HepG2 (cell line): ENCODE measurements at regions of chr20 and their contacts with region 1.

Region 1: DNA sequence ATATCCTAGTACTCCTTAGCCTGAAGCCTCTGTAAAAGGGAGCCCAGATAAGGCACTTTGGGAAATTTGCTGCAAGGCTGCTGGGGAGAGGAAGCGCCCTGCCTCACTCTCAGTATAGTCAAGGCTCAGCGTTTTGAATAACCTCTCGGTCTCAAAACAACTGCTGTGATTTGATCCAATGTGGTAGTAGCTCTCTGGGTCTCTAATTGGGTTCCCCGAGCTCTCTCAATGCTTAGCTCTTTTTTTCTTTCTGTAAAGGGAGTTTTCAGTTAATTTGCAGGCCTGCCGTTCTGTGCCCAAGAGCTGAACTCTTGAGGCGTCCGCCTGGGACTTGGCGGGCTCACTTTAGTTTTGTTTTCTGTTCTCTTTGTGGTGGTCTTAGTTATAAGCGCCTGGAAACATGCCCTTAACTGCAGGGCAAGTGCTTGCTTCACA is 41.2 kb downstream of the ZHX3 start:
- DNase-seq: no peak
- ATAC-seq: no peak
- H3K4me3 ChIP-seq: no peak overlapping the region
- H3K27ac ChIP-seq: no peak overlapping the region
- H3K4me1 ChIP-seq: peaks cover 6% of the 10 kb centered on the region; the same call in 1 of the 2 replicates
- H3K27me3 ChIP-seq: no peaks in the 10 kb centered on the region
- CTCF ChIP-seq: no peak
- EP300 ChIP-seq: no peak
- POLR2A ChIP-seq: no peak
- RAD21 ChIP-seq: no peak

Region 2: DNA sequence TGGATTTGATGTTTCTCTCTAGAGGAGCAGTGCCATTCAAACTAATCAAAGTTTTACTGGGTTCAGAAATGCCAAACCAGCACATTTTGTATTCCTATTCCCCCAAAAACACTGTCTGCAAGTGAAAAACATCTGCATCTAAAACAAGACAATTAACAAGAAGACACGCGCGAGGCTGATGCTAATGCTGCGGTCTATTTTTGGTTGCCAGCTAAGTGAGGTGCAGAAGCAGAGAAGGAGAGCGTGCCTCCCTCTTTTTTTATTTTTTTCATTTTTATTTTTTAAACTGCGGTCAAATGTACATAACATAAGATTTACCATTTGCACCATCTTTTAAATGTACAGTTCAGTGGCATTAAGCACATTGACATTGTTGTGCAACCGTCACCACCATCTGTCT is 1673.1 kb before region 1 on chr20:
- CTCF ChIA-PET with region 1: no interaction called
- POLR2A ChIA-PET with region 1: no interaction called
- in situ Hi-C with region 1: no loop called
- intact Hi-C with region 1: loop called (anchors 5 kb)
- DNase-seq: no peak
- ATAC-seq: no peak
- H3K4me3 ChIP-seq: no peak overlapping the region
- H3K27ac ChIP-seq: no peak overlapping the region
- H3K4me1 ChIP-seq: no peaks in the 10 kb centered on the region
- H3K27me3 ChIP-seq: no peaks in the 10 kb centered on the region
- CTCF ChIP-seq: no peak
- EP300 ChIP-seq: no peak
- POLR2A ChIP-seq: no peak
- RAD21 ChIP-seq: no peak